GM12878 (cell line): ENCODE measurements at regions of chr2 and their contacts with region 1.

Region 1: GRCh38 chr2:213934560-213934959 is 476.3 kb upstream of the VWC2L start:
- DNase-seq: peak; percentile 11
- ATAC-seq: peak; percentile 98
- H3K4me3 ChIP-seq: no peak overlapping the region
- H3K27ac ChIP-seq: no peak overlapping the region
- H3K4me1 ChIP-seq: no peaks in the 10 kb centered on the region
- H3K27me3 ChIP-seq: no peaks in the 10 kb centered on the region
- CTCF ChIP-seq: peak; percentile 48 to 56 (median 49); a peak in 5 of 6 replicates
- EP300 ChIP-seq: no peak
- POLR2A ChIP-seq: no peak
- RAD21 ChIP-seq: peak; percentile 60

Region 2: DNA sequence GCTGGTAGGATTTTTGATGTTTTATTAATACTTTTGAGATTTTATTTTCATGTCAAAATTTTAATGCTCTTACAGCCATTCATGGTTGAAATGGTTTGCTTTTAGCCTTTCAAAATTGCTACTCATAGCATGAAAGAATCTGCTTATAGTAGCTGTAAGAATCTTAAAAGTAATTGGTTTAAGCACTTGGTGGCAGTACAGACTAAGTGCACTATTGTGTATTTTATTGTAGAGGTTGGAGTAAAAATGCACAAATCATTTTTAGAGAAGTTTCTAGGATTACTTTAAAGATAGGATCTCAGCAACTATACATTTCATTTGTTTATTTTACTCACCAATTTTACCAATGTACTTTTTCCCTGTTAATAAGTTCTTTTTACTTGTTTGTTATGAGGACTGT is 444.5 kb before region 1 on chr2:
- CTCF ChIA-PET with region 1: interaction called, 24 read pairs
- POLR2A ChIA-PET with region 1: no interaction called
- RAD21 ChIA-PET with region 1: interaction called, 4 read pairs
- SMC1A ChIA-PET with region 1: interaction called, 5 read pairs
- in situ Hi-C with region 1: no loop called
- intact Hi-C with region 1: loop called (anchors 2 kb)
- DNase-seq: no peak
- ATAC-seq: peak; percentile 50; the same call in 1 of the 3 replicates
- H3K4me3 ChIP-seq: no peak overlapping the region
- H3K27ac ChIP-seq: no peak overlapping the region
- H3K4me1 ChIP-seq: no peaks in the 10 kb centered on the region
- H3K27me3 ChIP-seq: no peaks in the 10 kb centered on the region
- CTCF ChIP-seq: peak in 2 of 3 experiments; percentile 15 to 43; a peak in 2 of 6 replicates
- EP300 ChIP-seq: no peak
- POLR2A ChIP-seq: no peak
- RAD21 ChIP-seq: peak; percentile 61

Region 3: GRCh38 chr2:213806125-213806726 is 128.3 kb before region 1 on chr2:
- CTCF ChIA-PET with region 1: interaction called, 3 read pairs
- POLR2A ChIA-PET with region 1: no interaction called
- RAD21 ChIA-PET with region 1: no interaction called
- SMC1A ChIA-PET with region 1: no interaction called
- in situ Hi-C with region 1: no loop called
- intact Hi-C with region 1: loop called (anchors 5 kb)
- DNase-seq: no peak
- ATAC-seq: peak; percentile 53; the same call in 2 of the 3 replicates
- H3K4me3 ChIP-seq: no peak overlapping the region
- H3K27ac ChIP-seq: no peak overlapping the region
- H3K4me1 ChIP-seq: no peaks in the 10 kb centered on the region
- H3K27me3 ChIP-seq: no peaks in the 10 kb centered on the region
- CTCF ChIP-seq: peak in 1 of 3 experiments; percentile 28; a peak in 2 of 6 replicates
- EP300 ChIP-seq: no peak
- POLR2A ChIP-seq: no peak
- RAD21 ChIP-seq: no peak

Region 4: DNA sequence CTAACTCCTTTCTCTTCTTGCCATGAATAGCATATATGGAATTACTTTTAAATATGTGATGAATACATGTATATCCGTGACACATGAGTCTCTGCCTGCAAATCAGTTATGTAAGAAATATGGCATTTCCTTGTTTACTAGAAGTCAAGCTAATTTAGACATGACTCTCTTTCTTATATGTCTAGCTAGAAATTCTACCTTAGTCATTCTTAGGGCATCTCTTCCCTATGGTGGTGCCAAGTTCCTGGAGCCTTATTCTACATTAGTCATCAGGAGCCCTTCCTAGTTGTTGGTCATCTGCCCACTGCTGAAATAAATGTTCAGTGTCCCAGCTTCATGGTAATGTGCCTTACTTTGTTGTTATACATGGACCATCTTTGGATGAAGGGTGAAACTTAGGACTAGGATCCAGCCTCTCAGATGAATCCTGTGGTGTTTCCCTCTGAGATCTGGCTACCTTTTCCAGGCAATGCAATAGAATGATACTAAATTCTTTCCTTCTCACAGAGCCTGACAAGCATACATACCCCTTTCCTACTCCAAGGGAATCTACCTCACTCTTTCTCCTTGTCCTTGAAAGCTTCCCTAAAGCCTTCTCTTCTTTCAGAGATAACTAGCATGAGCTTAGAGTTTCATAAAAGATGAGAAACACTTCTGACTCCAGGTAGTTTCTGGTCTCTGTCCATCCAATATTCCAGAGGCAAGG is 61.0 kb after region 1 on chr2:
- CTCF ChIA-PET with region 1: no interaction called
- POLR2A ChIA-PET with region 1: no interaction called
- RAD21 ChIA-PET with region 1: no interaction called
- SMC1A ChIA-PET with region 1: no interaction called
- in situ Hi-C with region 1: no loop called
- intact Hi-C with region 1: no loop called
- DNase-seq: no peak
- ATAC-seq: no peak
- H3K4me3 ChIP-seq: no peak overlapping the region
- H3K27ac ChIP-seq: no peak overlapping the region
- H3K4me1 ChIP-seq: no peaks in the 10 kb centered on the region
- H3K27me3 ChIP-seq: no peaks in the 10 kb centered on the region
- CTCF ChIP-seq: no peak
- EP300 ChIP-seq: no peak
- POLR2A ChIP-seq: no peak
- RAD21 ChIP-seq: no peak